Heart right ventricle (tissue), 16 donors: ENCODE measurements at regions of chr3 and their contacts with region 1.

Region 1: GRCh38 chr3:30183421-30183820 is 423.0 kb upstream of the TGFBR2 start:
- DNase-seq: no peak
- ATAC-seq: no peak
- H3K4me3 ChIP-seq: no peak overlapping the region
- H3K27ac ChIP-seq: no peak overlapping the region
- H3K4me1 ChIP-seq: peaks cover 0 to 26% (median 12%) of the 10 kb centered on the region in 9 donors
- H3K27me3 ChIP-seq: no peaks in the 10 kb centered on the region
- CTCF ChIP-seq: no peak

Region 2: DNA sequence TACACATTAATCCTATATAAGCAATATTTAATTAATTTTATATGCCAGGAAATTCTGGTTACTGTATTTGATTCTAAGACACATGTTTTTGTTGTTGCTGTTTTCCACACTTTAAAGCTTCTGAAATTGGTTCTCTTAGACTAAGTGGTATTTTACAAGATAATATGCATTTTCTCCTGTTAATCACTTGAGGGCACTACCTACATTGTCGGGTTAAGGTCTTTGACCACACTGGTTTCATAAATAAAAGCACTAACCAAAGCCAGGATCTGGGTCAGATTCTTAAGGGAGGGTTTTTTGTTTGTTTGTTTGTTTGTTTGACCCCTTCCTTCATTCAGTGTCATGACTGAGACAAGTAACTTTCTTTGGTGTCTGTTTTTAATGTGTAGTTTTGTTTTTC is 312.3 kb before region 1 on chr3:
- intact Hi-C with region 1: no loop called
- DNase-seq: no peak
- ATAC-seq: no peak
- H3K4me3 ChIP-seq: no peak overlapping the region
- H3K27ac ChIP-seq: no peak overlapping the region
- H3K4me1 ChIP-seq: no peaks in the 10 kb centered on the region
- H3K27me3 ChIP-seq: no peaks in the 10 kb centered on the region
- CTCF ChIP-seq: no peak

Region 3: DNA sequence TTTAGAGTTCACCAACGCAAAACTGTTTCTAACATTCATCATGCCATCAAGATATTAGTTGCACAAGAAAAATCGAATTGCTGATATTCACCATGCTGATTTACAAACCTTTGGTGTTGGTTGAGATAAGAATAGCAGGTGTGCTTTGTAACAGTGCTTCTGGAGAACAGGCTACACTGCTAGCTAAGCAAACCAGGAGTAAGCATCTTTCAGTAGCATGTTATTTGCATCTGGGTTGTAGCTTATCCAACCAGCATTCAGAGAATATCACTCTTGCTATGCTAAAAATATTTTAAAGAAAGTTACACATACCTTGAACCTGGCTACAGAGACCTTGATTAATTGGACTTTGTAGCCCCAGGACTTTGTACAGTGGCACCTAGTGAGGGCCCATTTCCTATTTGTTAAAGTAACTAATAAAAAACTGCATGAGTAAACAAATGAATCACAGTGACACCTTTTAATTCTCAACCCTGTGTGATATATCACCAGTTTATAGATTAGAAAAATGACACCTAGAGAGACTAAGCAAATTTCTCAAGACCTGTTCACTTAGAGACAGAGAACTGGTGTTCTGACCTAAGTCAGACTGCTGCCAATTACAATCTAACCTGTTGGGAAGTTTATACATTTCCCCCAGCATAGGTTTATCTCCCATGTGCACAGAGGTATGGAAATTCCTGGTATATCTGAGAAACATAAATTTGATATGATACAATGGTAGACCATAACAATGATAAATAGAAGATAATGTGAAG is 12.6 kb before region 1 on chr3:
- intact Hi-C with region 1: loop called in 1 of 10 experiments (anchors 1 kb)
- DNase-seq: no peak
- ATAC-seq: no peak
- H3K4me3 ChIP-seq: no peak overlapping the region
- H3K27ac ChIP-seq: no peak overlapping the region
- H3K4me1 ChIP-seq: peaks cover 0 to 8% (median 0%) of the 10 kb centered on the region in 9 donors
- H3K27me3 ChIP-seq: no peaks in the 10 kb centered on the region
- CTCF ChIP-seq: no peak